ENCODE measurements at regions of chr11 and their contacts with region 1.

Region 1: DNA sequence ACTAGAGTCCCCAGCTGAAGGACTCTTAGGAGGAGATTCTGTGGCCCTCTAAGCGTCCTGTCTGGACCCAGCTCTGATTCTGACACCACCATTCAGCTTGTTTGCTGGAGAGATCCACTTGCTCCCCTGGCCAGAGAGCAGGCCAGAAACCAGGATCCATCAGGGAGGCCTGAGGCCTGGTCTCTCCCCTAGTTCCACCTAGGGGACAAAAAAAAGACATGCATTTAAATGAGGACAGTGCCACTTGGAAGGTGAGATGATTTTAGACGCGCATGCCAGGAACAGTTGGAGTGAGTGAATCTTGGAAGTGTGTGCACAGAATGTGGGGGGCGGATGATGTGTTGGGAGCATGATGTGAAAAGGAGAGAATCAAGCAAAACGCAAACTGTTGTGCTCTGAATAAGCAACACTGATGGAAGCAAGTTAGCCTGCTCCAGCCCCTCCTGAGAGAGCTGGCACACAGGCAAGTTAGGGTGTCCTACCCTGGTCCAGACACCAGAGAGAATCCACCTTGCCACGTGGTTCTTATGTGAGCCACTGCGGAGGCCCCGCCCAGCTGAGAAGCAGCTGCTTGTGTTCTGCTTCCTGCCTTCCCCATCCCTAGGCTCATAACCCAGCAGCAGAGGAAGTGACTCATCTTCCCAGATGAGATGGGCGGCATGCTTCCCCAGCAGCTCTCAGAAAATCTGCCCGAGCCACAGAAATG is 8.0 kb upstream of the SLCO2B1 start:
- DNase-seq: peak; percentile 68
- ATAC-seq: peak; percentile 87
- H3K4me3 ChIP-seq: no peak overlapping the region
- H3K27ac ChIP-seq: no peak overlapping the region; the same call in 1 of the 2 replicates
- H3K4me1 ChIP-seq: peaks cover 10% of the 10 kb centered on the region
- H3K27me3 ChIP-seq: no peaks in the 10 kb centered on the region; the same call in 1 of the 2 replicates
- CTCF ChIP-seq: no peak

Region 2: DNA sequence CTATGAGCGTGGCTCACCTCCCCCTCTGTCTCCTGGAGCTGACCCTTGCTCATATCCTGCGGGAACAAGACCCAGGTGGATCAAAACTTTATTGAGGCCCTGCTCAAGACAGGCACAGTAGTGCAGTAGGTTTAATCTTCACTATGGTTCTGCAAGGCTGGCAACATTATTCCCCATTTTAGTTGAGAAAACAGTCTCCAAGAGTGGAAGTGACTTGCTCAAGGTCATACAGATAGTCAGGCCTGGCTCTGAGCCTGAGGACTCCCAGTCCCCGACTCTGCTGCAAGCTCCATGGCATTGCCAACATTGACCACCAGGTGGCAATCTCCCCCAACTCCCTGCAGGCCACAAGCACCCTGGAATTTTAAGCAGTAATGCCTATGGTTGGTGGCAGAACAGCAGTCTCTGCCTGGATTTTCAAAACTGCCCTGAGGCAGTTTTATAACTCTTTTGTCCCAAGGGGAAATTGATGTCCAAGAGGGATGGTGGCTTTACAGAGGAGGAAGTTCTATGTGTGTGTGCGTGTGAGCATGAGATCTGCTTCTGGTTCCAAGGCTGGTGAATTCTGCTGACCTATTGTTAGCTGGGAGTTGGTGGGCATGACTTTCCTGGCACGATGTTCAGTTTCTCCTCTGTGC is 120.0 kb before region 1 on chr11:
- CTCF ChIA-PET with region 1: interaction called, 41 read pairs
- POLR2A ChIA-PET with region 1: no interaction called
- in situ Hi-C with region 1: no loop called
- intact Hi-C with region 1: loop called (anchors 5 kb)
- DNase-seq: peak; percentile 82
- ATAC-seq: peak; percentile 96
- H3K4me3 ChIP-seq: no peak overlapping the region
- H3K27ac ChIP-seq: no peak overlapping the region
- H3K4me1 ChIP-seq: no peaks in the 10 kb centered on the region
- H3K27me3 ChIP-seq: no peaks in the 10 kb centered on the region
- CTCF ChIP-seq: peak; percentile 99

Region 3: DNA sequence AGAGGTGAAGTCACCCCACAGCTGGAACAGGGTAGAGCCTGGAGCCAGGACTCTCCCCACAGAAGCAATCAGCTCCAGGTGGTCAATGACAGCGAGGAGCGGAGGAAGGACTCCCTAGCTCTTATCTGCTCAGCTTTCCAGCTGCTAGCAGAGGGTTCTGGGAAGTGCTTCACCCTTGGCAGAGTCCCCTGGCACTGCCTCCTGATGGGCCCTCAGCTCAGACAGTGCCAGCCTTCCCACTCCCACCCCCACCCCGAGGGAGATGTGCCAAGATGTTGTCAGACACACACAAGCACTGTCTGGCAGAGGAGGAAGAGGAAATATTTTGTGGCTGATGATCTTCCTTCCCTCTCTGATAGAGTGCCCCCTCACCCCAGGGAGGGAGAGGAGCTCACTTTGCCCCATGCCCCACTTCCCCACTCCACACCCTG is 52.3 kb after region 1 on chr11:
- CTCF ChIA-PET with region 1: interaction called, 11 read pairs
- POLR2A ChIA-PET with region 1: no interaction called
- in situ Hi-C with region 1: no loop called
- intact Hi-C with region 1: no loop called
- DNase-seq: no peak
- ATAC-seq: no peak
- H3K4me3 ChIP-seq: no peak overlapping the region
- H3K27ac ChIP-seq: no peak overlapping the region
- H3K4me1 ChIP-seq: no peaks in the 10 kb centered on the region
- H3K27me3 ChIP-seq: peaks cover 6% of the 10 kb centered on the region
- CTCF ChIP-seq: no peak

Region 4: DNA sequence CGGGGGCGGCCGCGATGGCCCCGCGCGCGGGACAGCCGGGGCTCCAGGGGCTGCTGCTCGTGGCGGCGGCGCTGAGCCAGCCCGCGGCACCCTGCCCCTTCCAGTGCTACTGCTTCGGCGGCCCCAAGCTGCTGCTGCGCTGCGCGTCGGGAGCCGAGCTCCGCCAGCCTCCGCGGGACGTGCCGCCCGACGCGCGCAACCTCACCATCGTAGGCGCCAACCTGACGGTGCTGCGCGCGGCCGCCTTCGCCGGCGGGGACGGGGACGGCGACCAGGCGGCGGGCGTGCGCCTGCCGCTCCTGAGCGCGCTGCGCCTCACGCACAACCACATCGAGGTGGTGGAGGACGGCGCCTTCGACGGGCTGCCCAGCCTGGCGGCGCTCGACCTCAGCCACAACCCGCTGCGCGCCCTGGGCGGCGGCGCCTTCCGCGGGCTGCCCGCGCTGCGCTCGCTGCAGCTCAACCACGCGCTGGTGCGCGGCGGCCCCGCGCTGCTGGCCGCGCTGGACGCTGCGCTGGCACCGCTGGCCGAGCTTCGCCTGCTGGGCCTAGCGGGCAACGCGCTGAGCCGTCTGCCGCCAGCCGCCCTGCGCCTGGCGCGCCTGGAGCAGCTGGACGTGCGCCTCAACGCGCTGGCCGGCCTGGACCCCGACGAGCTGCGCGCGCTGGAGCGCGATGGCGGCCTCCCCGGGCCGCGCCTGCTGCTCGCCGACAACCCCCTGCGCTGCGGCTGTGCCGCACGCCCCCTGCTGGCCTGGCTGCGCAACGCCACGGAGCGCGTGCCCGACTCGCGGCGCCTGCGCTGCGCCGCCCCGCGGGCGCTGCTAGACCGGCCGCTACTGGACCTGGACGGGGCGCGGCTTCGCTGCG is 98.4 kb after region 1 on chr11:
- CTCF ChIA-PET with region 1: interaction called, 83 read pairs
- POLR2A ChIA-PET with region 1: no interaction called
- in situ Hi-C with region 1: no loop called
- intact Hi-C with region 1: no loop called
- DNase-seq: peak; percentile 60
- ATAC-seq: peak; percentile 92
- H3K4me3 ChIP-seq: peak overlapping the region; percentile 42 to 53
- H3K27ac ChIP-seq: no peak overlapping the region
- H3K4me1 ChIP-seq: no peaks in the 10 kb centered on the region
- H3K27me3 ChIP-seq: no peaks in the 10 kb centered on the region; the same call in 1 of the 2 replicates
- CTCF ChIP-seq: peak; percentile 100

Region 5: GRCh38 chr11:75468534-75469340 is 325.9 kb after region 1 on chr11:
- CTCF ChIA-PET with region 1: interaction called, 14 read pairs
- POLR2A ChIA-PET with region 1: no interaction called
- in situ Hi-C with region 1: no loop called
- intact Hi-C with region 1: no loop called
- DNase-seq: no peak
- ATAC-seq: no peak
- H3K4me3 ChIP-seq: no peak overlapping the region
- H3K27ac ChIP-seq: no peak overlapping the region
- H3K4me1 ChIP-seq: no peaks in the 10 kb centered on the region
- H3K27me3 ChIP-seq: no peaks in the 10 kb centered on the region
- CTCF ChIP-seq: no peak

Measured in Panc1 (cell line).